ENCODE measurements at regions of chr11 and their contacts with region 1.

Region 1: GRCh38 chr11:46616998-46617675 is at the starts of genes ATG13 and HARBI1:
- DNase-seq: no peak
- ATAC-seq: peak; percentile 97
- H3K4me3 ChIP-seq: peak within 1 kb of the TSS; percentile 88 to 94
- H3K27ac ChIP-seq: peak within 1 kb of the TSS; percentile 96
- H3K4me1 ChIP-seq: peaks cover 22% of the 10 kb centered on the region
- H3K27me3 ChIP-seq: no peaks in the 10 kb centered on the region
- CTCF ChIP-seq: no peak
- total RNA-seq, gene ATG13: 57.9 TPM
- total RNA-seq, gene HARBI1: 6.4 TPM

Region 2: GRCh38 chr11:45332276-45332934 is 1284.7 kb before region 1 on chr11:
- CTCF ChIA-PET with region 1: no interaction called
- POLR2A ChIA-PET with region 1: no interaction called
- in situ Hi-C with region 1: no loop called
- intact Hi-C with region 1: no loop called
- DNase-seq: peak; percentile 32
- ATAC-seq: peak; percentile 86
- H3K4me3 ChIP-seq: no peak overlapping the region
- H3K27ac ChIP-seq: no peak overlapping the region
- H3K4me1 ChIP-seq: peaks cover 3% of the 10 kb centered on the region; the same call in 1 of the 2 replicates
- H3K27me3 ChIP-seq: peaks cover 20% of the 10 kb centered on the region
- CTCF ChIP-seq: peak; percentile 86

Region 3: GRCh38 chr11:46554205-46555055 is 62.7 kb before region 1 on chr11:
- CTCF ChIA-PET with region 1: no interaction called
- POLR2A ChIA-PET with region 1: interaction called, 3 read pairs
- in situ Hi-C with region 1: no loop called
- intact Hi-C with region 1: loop called (anchors 5 kb)
- DNase-seq: peak; percentile 89
- ATAC-seq: peak; percentile 79
- H3K4me3 ChIP-seq: peak overlapping the region in 1 of 2 experiments; percentile 7; a peak in 2 of 4 replicates
- H3K27ac ChIP-seq: peak overlapping the region; percentile 96
- H3K4me1 ChIP-seq: peaks cover 67% of the 10 kb centered on the region
- H3K27me3 ChIP-seq: no peaks in the 10 kb centered on the region
- CTCF ChIP-seq: no peak

Region 4: DNA sequence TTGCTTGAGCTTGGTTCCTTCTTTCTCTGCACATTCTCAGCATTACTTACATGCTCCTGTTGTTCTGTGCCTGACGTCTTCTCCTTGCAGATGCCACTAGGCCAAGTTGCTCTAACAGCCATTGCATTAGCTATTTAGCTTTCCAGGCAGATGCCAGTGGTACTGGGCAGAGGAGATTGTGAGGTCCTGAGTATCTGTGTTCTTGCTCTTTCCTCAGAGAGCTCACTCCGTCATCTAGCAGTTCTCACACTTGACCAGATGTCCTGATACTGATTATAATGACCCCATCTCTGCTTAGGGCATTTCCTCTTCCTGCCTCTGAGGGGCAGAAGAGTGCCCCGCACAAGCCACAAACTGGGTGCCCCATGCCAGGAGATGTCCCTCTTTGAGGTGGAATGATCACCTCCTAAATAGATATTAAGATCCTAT is 52.6 kb after region 1 on chr11:
- CTCF ChIA-PET with region 1: interaction called, 10 read pairs
- POLR2A ChIA-PET with region 1: no interaction called
- in situ Hi-C with region 1: no loop called
- intact Hi-C with region 1: no loop called
- DNase-seq: no peak
- ATAC-seq: no peak; the same call in 1 of the 2 replicates
- H3K4me3 ChIP-seq: no peak overlapping the region
- H3K27ac ChIP-seq: no peak overlapping the region
- H3K4me1 ChIP-seq: no peaks in the 10 kb centered on the region; the same call in 1 of the 2 replicates
- H3K27me3 ChIP-seq: no peaks in the 10 kb centered on the region
- CTCF ChIP-seq: no peak; the same call in 1 of the 2 replicates

Region 5: GRCh38 chr11:46676436-46677158 is 59.5 kb after region 1 on chr11:
- CTCF ChIA-PET with region 1: no interaction called
- POLR2A ChIA-PET with region 1: interaction called, 14 read pairs
- in situ Hi-C with region 1: no loop called
- intact Hi-C with region 1: no loop called
- DNase-seq: no peak
- ATAC-seq: no peak
- H3K4me3 ChIP-seq: no peak overlapping the region
- H3K27ac ChIP-seq: no peak overlapping the region
- H3K4me1 ChIP-seq: peaks cover 8% of the 10 kb centered on the region
- H3K27me3 ChIP-seq: no peaks in the 10 kb centered on the region
- CTCF ChIP-seq: no peak

Region 6: GRCh38 chr11:46696212-46696558 is 79.0 kb after region 1 on chr11:
- CTCF ChIA-PET with region 1: no interaction called
- POLR2A ChIA-PET with region 1: interaction called, 10 read pairs
- in situ Hi-C with region 1: no loop called
- intact Hi-C with region 1: no loop called
- DNase-seq: no peak
- ATAC-seq: no peak
- H3K4me3 ChIP-seq: no peak overlapping the region
- H3K27ac ChIP-seq: no peak overlapping the region
- H3K4me1 ChIP-seq: no peaks in the 10 kb centered on the region; the same call in 1 of the 2 replicates
- H3K27me3 ChIP-seq: no peaks in the 10 kb centered on the region
- CTCF ChIP-seq: no peak

Region 7: GRCh38 chr11:46845740-46846509 is 228.8 kb after region 1 on chr11 and contains the start of gene CKAP5:
- CTCF ChIA-PET with region 1: no interaction called
- POLR2A ChIA-PET with region 1: interaction called, 20 read pairs
- in situ Hi-C with region 1: no loop called
- intact Hi-C with region 1: no loop called
- DNase-seq: peak; percentile 55
- ATAC-seq: peak; percentile 98
- H3K4me3 ChIP-seq: peak within 1 kb of the TSS; percentile 76 to 96
- H3K27ac ChIP-seq: peak within 1 kb of the TSS; percentile 94
- H3K4me1 ChIP-seq: peaks cover 12% of the 10 kb centered on the region
- H3K27me3 ChIP-seq: no peaks in the 10 kb centered on the region
- CTCF ChIP-seq: no peak
- total RNA-seq, gene CKAP5: 191 TPM

Measured in Panc1 (cell line).